ENCODE measurements at regions of chr3 and their contacts with region 1.

Region 1: DNA sequence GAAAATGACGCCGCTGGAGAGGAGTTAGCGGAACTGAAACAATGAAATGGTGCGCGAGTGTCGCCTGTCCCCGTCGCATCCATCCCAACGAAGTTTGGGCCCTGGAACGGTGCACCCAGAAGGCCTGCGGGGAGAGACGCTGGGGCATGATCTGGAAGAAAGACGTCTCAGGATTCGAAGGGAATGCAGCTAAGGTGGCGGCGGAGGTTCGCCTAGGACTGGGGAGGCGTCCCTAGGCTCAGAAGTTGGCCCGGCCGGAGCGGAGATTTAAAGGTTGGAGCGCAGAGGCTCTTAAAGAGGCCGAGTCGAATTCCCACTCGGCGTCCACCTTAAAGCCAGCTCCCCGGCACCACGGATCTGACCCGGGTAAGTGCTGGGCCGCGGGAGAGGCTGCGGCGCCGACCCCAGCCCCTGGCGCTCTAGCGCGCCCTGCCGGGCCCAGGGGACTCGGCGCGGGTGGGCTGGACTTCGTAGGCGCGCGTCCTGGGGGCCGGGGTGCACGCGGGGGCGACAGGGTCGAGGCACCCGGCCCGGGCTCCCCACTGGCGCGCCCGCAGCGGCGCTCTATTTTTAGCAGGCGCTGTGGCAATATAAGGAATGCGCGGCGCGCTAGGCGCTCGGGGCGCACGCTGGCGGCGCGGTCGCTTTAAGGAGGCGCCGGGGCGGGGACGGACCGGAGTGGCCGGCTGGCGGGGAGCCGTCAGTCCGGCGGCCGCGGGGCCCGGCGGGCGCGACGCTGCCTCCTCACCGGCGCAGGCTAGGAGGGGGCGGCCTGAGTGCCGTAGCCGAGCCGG is at the start of gene MRAS:
- DNase-seq: peak; percentile 66
- H3K4me3 ChIP-seq: peak within 1 kb of the TSS; percentile 64 to 68 (median 64)
- H3K27ac ChIP-seq: peak within 1 kb of the TSS; percentile 23
- H3K4me1 ChIP-seq: peaks cover 6% of the 10 kb centered on the region
- H3K27me3 ChIP-seq: no peaks in the 10 kb centered on the region
- CTCF ChIP-seq: peak in 1 of 2 donors; percentile 37
- total RNA-seq, gene MRAS: 16.4 to 55.3 TPM

Region 2: DNA sequence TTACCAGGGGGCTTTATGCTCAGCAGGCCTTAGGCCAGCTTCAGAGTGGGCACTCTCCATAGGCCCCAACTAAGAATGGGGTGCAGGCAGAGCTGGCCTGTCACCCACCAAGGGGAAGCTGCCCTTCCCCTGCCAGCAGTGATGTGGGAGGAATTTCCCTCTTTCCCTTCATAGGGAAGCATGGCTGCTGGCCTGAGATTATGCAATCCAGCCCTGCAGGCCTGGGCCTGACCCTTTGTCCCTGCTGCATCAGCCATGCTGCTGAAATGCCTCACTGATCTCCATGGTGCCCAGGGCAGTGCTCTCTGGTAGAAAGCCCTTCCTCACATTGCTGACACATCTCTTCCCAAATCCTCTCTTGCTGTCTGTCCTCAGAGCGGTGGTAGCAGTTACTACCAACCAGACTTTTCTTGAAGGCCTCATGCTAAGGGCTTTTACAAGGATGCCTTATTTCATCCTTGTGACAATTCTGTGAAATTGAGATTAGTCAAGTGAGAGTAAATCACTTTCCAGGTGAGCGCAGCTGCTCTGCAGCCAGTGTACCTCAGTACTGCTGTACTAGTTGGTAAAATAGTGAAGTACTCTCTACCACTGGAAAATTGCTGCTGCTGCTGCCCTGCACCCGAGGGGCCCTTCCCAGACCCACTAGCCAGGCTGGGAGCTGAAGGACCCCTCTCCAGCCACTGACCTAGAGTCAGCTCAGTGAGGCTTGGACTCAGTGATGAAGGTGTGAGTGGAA is 34.0 kb after region 1 on chr3:
- CTCF ChIA-PET with region 1: no interaction called
- dilution Hi-C with region 1: no loop called
- in situ Hi-C with region 1: no loop called
- intact Hi-C with region 1: loop called (anchors 1 kb)
- DNase-seq: peak; percentile 84
- H3K4me3 ChIP-seq: no peak overlapping the region
- H3K27ac ChIP-seq: peak overlapping the region; percentile 57
- H3K4me1 ChIP-seq: peaks cover 21% of the 10 kb centered on the region
- H3K27me3 ChIP-seq: no peaks in the 10 kb centered on the region
- CTCF ChIP-seq: no peak

Region 3: GRCh38 chr3:138408751-138409161 is 60.6 kb after region 1 on chr3:
- CTCF ChIA-PET with region 1: no interaction called
- dilution Hi-C with region 1: loop called (anchors 10 kb)
- in situ Hi-C with region 1: no loop called
- intact Hi-C with region 1: no loop called
- DNase-seq: no peak
- H3K4me3 ChIP-seq: no peak overlapping the region
- H3K27ac ChIP-seq: no peak overlapping the region
- H3K4me1 ChIP-seq: no peaks in the 10 kb centered on the region
- H3K27me3 ChIP-seq: no peaks in the 10 kb centered on the region
- CTCF ChIP-seq: no peak

Region 4: GRCh38 chr3:138567401-138567800 is 219.2 kb after region 1 on chr3:
- CTCF ChIA-PET with region 1: no interaction called
- dilution Hi-C with region 1: no loop called
- in situ Hi-C with region 1: no loop called
- intact Hi-C with region 1: no loop called
- DNase-seq: no peak
- H3K4me3 ChIP-seq: no peak overlapping the region
- H3K27ac ChIP-seq: no peak overlapping the region
- H3K4me1 ChIP-seq: no peaks in the 10 kb centered on the region
- H3K27me3 ChIP-seq: no peaks in the 10 kb centered on the region
- CTCF ChIP-seq: no peak